PC-3 (cell line): ENCODE measurements at regions of chr7 and their contacts with region 1.

Region 1: DNA sequence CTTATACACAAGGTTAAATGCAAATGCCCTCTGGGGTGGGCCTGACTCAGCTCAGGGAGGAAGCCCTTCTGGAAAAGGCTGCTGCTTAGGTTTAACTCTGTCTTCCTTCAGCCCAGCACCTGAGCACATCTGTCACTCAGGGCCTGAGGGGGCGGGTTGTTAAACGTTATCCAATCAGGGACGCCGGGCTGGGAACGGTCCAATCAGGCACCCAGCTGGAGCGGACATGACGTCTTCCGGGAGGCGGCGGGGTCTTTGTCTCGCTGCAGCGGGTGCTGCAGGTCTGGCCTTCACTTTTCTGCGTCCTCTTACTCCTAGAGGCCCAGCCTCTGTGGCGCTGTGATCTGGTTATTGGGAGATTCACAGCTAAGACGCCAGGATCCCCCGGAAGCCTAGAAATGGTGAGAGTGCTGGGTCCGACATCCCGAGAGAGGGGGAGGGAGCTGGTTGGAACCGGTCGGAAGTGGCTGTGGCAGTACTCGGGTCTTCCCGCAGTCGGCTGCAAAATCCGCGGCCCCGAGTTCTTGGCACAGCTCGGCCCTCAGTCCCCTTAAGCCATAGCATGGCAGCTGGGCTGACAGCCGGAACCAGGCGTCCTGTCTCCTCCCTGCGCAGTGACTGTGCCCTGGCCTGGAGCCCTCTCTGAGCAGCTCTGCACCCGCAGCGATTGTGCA is at the start of gene ZNF138:
- DNase-seq: peak; percentile 95
- ATAC-seq: peak; percentile 100
- H3K4me3 ChIP-seq: peak within 1 kb of the TSS; percentile 98
- H3K27ac ChIP-seq: peak within 1 kb of the TSS; percentile 50
- H3K4me1 ChIP-seq: 0 out of 2 replicates have a peak, but pooled peaks cover 10% of the 10 kb centered on the region
- H3K27me3 ChIP-seq: no peaks in the 10 kb centered on the region
- CTCF ChIP-seq: no peak
- total RNA-seq, gene ZNF138: 4.1 and 10.9 TPM in 2 replicates

Region 2: GRCh38 chr7:64665980-64666662 is 128.2 kb before region 1 on chr7 and contains the start of gene ZNF107:
- CTCF ChIA-PET with region 1: no interaction called
- POLR2A ChIA-PET with region 1: interaction called, 5 read pairs
- intact Hi-C with region 1: loop called (anchors 10 kb)
- DNase-seq: peak; percentile 92
- ATAC-seq: peak; percentile 99
- H3K4me3 ChIP-seq: peak within 1 kb of the TSS; percentile 99
- H3K27ac ChIP-seq: peak within 1 kb of the TSS; percentile 42
- H3K4me1 ChIP-seq: peaks cover 9% of the 10 kb centered on the region; the same call in 1 of the 2 replicates
- H3K27me3 ChIP-seq: no peaks in the 10 kb centered on the region
- CTCF ChIP-seq: no peak
- total RNA-seq, gene ZNF107: 4.3 and 4.8 TPM in 2 replicates

Region 3: GRCh38 chr7:64902806-64903721 is 108.8 kb after region 1 on chr7 and contains the start of gene ZNF273:
- CTCF ChIA-PET with region 1: no interaction called
- POLR2A ChIA-PET with region 1: no interaction called
- intact Hi-C with region 1: loop called (anchors 2 kb)
- DNase-seq: peak; percentile 87
- ATAC-seq: peak; percentile 99
- H3K4me3 ChIP-seq: peak within 1 kb of the TSS; percentile 77
- H3K27ac ChIP-seq: 0 out of 2 replicates have a peak within 1 kb of the TSS, but pooled peaks have one; percentile 5
- H3K4me1 ChIP-seq: peaks cover 10% of the 10 kb centered on the region; the same call in 1 of the 2 replicates
- H3K27me3 ChIP-seq: no peaks in the 10 kb centered on the region
- CTCF ChIP-seq: no peak
- total RNA-seq, gene ZNF273: 5.7 and 7.6 TPM in 2 replicates